ENCODE measurements at regions of chr5 and their contacts with region 1.

Region 1: DNA sequence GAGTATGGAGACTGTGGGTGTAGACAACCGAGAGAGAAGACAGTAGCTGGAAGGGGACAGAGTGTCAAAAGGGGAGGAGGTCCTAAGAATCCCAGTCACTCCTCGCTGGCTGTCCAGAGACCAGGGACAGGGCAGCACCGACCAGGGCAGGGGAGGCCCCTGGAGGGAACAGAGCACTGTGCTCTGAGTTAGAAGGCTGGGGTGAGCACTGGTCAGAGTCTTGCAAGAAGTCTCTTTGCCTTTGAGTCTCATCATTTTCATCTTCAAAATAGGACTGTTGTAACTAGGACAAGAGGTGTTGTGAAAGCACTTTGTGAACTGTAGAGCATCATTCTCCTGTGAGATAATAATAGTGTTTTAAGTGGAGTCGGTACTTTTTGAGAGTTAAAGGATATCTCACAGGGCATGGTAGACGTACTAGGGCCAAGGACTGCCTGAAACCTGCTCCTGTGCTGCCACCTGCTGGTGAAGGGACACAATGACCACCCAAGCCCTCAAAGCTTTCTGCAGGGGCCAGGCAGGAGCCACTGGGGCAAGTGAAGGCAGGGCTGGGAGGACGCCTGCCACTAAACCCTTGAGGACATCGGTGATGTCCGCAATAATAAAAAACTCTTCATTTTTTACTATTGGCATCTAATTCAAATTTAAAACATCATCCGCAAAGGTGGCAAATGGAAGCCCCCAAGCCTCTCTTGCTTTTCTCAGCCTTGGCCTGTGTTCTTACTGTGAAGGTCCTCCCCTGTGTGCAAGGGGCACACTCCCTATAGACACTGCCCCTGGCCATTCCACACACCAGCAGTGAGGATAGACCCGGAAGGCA is 28.2 kb downstream of the SLC6A7 start:
- DNase-seq: peak; percentile 91
- H3K4me3 ChIP-seq: no peak overlapping the region; a peak in 1 of 4 replicates
- H3K27ac ChIP-seq: no peak overlapping the region
- H3K4me1 ChIP-seq: no peaks in the 10 kb centered on the region
- H3K27me3 ChIP-seq: no peaks in the 10 kb centered on the region
- CTCF ChIP-seq: peak; percentile 92
- EP300 ChIP-seq: no peak
- RAD21 ChIP-seq: peak; percentile 96

Region 2: DNA sequence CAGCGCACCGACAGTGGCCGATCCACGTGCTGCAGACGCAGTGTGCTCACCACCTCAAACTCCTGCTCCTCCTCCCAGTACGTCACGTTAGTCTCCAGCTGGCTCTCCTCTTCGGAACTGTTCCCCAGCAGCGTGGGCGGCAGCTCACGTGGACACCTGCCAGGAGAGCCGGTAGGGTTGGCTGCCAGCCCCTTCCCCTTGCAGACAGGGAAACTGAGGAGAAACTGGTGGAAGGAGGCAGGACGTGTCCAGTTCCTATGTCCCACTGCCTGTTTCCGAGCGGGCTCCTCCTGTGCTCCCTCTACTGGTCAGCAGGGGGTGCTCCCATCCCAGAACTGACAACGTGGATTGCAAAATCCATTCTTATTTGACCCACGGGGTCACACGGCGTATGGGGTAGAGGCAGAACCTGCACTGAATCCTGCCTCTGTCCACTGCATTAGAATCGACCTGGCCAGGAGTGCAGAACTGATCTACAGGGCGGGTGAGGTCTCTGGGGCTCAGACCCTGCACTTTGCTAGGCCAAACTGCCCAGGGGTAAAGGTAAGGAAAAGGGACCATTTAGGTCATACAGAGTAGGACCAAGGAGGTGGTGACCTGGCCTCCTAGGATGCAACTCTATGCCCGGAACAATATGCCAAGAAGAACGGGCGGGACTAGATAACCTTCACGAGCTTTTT is 88.1 kb before region 1 on chr5:
- CTCF ChIA-PET with region 1: interaction called, 173 read pairs
- POLR2A ChIA-PET with region 1: no interaction called
- DNase-seq: peak; percentile 92
- H3K4me3 ChIP-seq: no peak overlapping the region; a peak in 1 of 4 replicates
- H3K27ac ChIP-seq: no peak overlapping the region; a peak in 1 of 4 replicates
- H3K4me1 ChIP-seq: no peaks in the 10 kb centered on the region; a peak in 1 of 4 replicates
- H3K27me3 ChIP-seq: no peaks in the 10 kb centered on the region
- CTCF ChIP-seq: peak; percentile 94
- EP300 ChIP-seq: no peak
- RAD21 ChIP-seq: peak; percentile 97

Region 3: DNA sequence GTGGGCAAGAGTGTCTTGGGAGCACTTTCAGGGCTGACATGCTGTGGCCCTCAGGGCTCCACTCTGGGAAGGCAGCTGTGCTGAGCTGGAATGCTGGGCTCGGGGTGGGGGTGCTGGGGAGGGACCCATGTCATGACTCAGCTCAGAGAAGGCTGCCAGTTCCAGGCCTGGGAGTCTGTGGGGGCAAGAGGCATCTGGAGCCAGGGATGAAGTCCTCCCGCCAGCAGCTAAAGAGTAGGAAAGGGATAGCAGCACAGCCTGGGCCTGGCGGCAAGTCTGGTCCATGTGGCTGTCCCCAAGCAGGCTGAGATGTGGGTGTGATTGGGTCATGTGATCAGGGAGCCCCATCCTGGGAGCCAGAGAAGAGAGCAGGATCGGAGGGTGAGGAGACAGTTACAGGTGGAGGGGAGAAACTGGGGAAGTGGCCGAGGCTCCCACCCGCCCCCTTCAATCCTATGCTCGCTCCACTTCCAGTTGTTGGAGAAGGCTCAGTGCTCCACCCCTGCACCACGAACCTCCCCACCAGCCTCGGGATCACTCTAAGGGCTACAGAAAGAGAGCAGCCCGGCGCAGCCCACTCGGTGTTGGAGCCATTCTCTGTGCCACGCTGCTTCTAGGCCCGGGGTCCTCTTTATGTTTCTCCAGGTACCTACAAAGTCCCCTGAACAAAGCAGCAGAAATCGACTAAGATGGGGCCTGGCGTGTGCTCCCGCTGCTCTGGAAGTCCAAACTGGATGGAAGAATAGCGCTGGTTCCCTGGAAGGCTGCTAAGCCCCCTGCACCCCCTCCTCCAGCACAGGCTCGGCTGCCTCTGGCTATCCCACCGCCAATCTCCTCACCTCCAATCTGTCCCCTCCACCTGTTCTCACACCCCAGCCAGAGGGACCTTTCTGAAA is 74.5 kb before region 1 on chr5:
- CTCF ChIA-PET with region 1: interaction called, 15 read pairs
- POLR2A ChIA-PET with region 1: no interaction called
- DNase-seq: peak; percentile 68
- H3K4me3 ChIP-seq: peak overlapping the region in 1 of 2 experiments; percentile 30; a peak in 2 of 4 replicates
- H3K27ac ChIP-seq: peak overlapping the region; percentile 92 to 99
- H3K4me1 ChIP-seq: peaks cover 60 to 86% of the 10 kb centered on the region in 2 experiments
- H3K27me3 ChIP-seq: no peaks in the 10 kb centered on the region
- CTCF ChIP-seq: no peak
- EP300 ChIP-seq: peak in 1 of 2 experiments; percentile 21; a peak in 2 of 4 replicates
- RAD21 ChIP-seq: no peak

Region 4: GRCh38 chr5:150161242-150162141 is 56.6 kb before region 1 on chr5:
- CTCF ChIA-PET with region 1: interaction called, 17 read pairs
- POLR2A ChIA-PET with region 1: no interaction called
- DNase-seq: peak; percentile 89
- H3K4me3 ChIP-seq: no peak overlapping the region
- H3K27ac ChIP-seq: peak overlapping the region in 1 of 2 experiments; percentile 96; a peak in 2 of 4 replicates
- H3K4me1 ChIP-seq: peaks cover 26 to 56% of the 10 kb centered on the region in 2 experiments
- H3K27me3 ChIP-seq: no peaks in the 10 kb centered on the region
- CTCF ChIP-seq: peak; percentile 94
- EP300 ChIP-seq: no peak
- RAD21 ChIP-seq: peak; percentile 80

Region 5: DNA sequence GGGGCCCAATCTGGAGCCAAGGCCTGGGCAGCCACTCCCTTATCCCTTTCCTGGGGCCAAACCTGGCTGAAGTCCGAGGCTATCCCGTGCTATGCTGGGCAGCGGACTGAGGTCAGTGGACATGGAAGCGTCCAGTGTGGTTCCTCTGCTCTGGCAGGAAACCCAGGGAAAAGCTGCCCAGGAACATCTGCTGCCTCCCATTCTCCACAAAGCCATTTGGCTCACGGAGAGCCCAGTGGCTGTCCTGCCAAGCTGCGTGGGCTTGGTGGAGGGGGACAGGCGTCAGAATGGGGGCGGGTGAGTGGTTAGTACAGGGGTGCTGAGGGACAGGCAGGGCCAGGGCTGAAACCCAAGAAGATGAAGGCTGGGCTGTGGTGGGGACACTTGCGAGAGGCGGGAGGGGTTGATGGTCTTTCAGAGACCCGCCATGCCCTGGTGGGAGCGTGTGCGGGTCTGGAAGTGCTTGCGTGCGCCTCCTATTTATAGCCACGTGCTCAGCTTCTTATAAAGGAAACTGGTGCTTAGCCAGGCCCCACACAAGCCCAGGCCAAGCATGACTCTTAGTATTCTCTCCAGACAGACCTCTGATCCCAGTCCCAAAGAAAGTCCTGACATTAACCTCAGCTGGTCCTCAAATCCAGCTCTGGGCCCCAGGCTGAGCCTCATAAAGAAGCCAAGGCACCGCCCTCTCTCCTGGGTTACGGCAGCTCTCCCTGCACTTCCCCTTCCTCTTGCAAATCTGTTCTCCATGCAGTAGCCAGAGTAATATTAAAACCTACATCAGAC is 37.6 kb before region 1 on chr5:
- CTCF ChIA-PET with region 1: interaction called, 13 read pairs
- POLR2A ChIA-PET with region 1: no interaction called
- DNase-seq: no peak
- H3K4me3 ChIP-seq: no peak overlapping the region
- H3K27ac ChIP-seq: no peak overlapping the region
- H3K4me1 ChIP-seq: no peaks in the 10 kb centered on the region; a peak in 1 of 4 replicates
- H3K27me3 ChIP-seq: no peaks in the 10 kb centered on the region
- CTCF ChIP-seq: no peak
- EP300 ChIP-seq: no peak
- RAD21 ChIP-seq: no peak

Region 6: GRCh38 chr5:150206098-150206778 is 11.8 kb before region 1 on chr5:
- CTCF ChIA-PET with region 1: interaction called, 16 read pairs
- POLR2A ChIA-PET with region 1: no interaction called
- DNase-seq: no peak
- H3K4me3 ChIP-seq: no peak overlapping the region
- H3K27ac ChIP-seq: no peak overlapping the region
- H3K4me1 ChIP-seq: 0 out of 4 replicates have a peak, but pooled peaks cover 0 to 4% of the 10 kb centered on the region in 2 experiments
- H3K27me3 ChIP-seq: no peaks in the 10 kb centered on the region; the same call in 1 of the 2 replicates
- CTCF ChIP-seq: no peak
- EP300 ChIP-seq: no peak
- RAD21 ChIP-seq: no peak